AG04450 (cell line): ENCODE measurements at regions of chr22 and their contacts with region 1.

Region 1: DNA sequence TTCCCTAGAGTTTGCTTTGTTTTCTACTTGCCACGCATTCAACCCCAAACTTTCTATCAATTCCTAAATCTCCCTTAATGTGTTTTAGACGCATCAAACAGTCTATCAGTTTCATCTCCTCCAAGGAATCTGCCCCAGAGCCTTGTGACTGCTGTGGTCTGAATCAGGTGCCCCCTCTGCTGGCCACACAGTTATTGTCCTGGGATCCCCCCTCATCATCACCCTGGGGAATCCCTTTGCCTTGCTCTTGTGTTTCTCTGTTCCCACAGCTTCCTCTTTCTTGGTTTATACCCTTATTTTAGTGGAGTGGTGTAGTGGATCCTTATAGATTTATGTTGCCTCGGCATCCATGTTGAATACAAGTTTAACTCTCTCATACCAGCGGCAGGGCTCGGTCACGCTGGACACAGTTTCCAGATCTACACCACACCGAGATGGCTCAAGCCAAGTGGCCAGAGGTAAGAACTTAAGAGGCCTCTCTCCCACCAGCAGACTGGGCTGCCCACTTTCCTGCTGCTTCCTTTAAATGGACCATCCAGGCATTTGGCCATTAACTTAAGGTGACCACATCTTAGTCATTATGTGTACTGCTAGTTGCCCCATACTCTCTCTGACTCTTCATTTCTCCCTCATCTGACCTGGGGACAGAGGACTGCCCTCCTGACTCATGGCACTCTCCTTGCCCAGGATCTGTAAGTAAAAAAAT is 8.2 kb downstream of the UPB1 start:
- DNase-seq: no peak
- H3K4me3 ChIP-seq: no peak overlapping the region
- H3K27ac ChIP-seq: no peak overlapping the region
- H3K27me3 ChIP-seq: peaks cover 9% of the 10 kb centered on the region
- CTCF ChIP-seq: peak; percentile 82

Region 2: GRCh38 chr22:24486501-24486921 is 16.8 kb before region 1 on chr22:
- CTCF ChIA-PET with region 1: interaction called, 13 read pairs
- POLR2A ChIA-PET with region 1: no interaction called
- DNase-seq: no peak
- H3K4me3 ChIP-seq: no peak overlapping the region
- H3K27ac ChIP-seq: no peak overlapping the region
- H3K27me3 ChIP-seq: no peaks in the 10 kb centered on the region
- CTCF ChIP-seq: no peak

Region 3: DNA sequence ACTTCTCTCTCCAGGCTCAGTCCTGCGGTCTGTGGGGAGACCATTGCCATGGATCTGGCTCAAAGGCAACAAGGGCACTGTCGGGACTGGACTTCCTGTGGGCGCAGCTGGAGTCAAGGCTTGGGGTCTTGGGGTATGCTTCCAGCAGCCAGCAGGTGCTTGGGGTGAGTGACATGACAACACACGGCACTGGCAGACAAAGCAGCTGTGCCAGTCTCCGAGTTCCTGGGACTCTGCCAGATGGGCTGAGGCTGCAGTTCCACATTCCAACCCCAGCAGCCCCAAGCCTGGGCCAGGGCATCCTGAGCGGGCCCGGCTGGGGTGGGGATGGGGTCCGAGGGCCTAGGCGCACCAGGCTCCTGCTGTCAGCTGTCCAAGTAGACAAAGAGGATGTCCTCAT is 39.4 kb after region 1 on chr22:
- CTCF ChIA-PET with region 1: no interaction called
- POLR2A ChIA-PET with region 1: no interaction called
- DNase-seq: no peak
- H3K4me3 ChIP-seq: no peak overlapping the region
- H3K27ac ChIP-seq: no peak overlapping the region
- H3K27me3 ChIP-seq: no peaks in the 10 kb centered on the region
- CTCF ChIP-seq: no peak